Uterus (tissue), 4 donors: ENCODE measurements at regions of chr10 and their contacts with region 1.

Region 1: GRCh38 chr10:86899670-86900276 is 57.6 kb downstream of the MMRN2 start:
- DNase-seq: peak; percentile 63 to 78
- H3K4me3 ChIP-seq: no peak overlapping the region
- H3K27ac ChIP-seq: peak overlapping the region; percentile 26 to 30
- H3K4me1 ChIP-seq: peaks cover 0 to 4% of the 10 kb centered on the region in 2 donors
- H3K27me3 ChIP-seq: no peaks in the 10 kb centered on the region
- CTCF ChIP-seq: peak; percentile 75 to 86 (median 80)
- POLR2A ChIP-seq: no peak

Region 2: DNA sequence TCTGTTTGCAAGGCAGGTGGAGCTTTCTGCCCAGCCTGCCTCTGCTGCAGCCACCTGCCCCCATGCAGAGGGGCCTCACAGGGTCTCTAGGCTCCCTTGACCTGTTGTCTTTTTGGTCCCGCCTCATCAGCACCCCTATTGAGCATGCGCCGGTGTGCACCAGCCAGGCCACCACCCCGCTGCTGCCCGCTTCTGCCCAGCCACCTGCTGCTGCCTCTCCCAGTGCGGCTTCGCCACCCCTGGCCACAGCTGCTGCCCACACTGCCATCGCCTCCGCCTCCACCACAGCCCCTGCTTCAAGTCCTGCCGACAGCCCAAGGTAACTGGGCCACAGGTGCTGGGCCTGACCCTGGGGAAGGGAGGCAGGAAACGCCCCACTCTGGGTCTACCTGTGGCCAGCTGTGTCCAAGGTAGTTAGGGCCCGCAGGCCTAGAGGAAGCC is 193.4 kb before region 1 on chr10:
- intact Hi-C with region 1: loop called (anchors 5 kb)
- DNase-seq: no peak
- H3K4me3 ChIP-seq: no peak overlapping the region
- H3K27ac ChIP-seq: no peak overlapping the region
- H3K4me1 ChIP-seq: no peaks in the 10 kb centered on the region
- H3K27me3 ChIP-seq: no peaks in the 10 kb centered on the region
- CTCF ChIP-seq: no peak
- POLR2A ChIP-seq: no peak

Region 3: GRCh38 chr10:87105446-87106124 is 205.8 kb after region 1 on chr10:
- intact Hi-C with region 1: no loop called
- DNase-seq: no peak
- H3K4me3 ChIP-seq: no peak overlapping the region
- H3K27ac ChIP-seq: no peak overlapping the region
- H3K4me1 ChIP-seq: no peaks in the 10 kb centered on the region
- H3K27me3 ChIP-seq: no peaks in the 10 kb centered on the region
- CTCF ChIP-seq: no peak
- POLR2A ChIP-seq: no peak